SK-N-SH (cell line): ENCODE measurements at regions of chr1 and their contacts with region 1.

Region 1: GRCh38 chr1:54406339-54407153 is at the start of gene SSBP3:
- DNase-seq: peak; percentile 99
- H3K4me3 ChIP-seq: peak within 1 kb of the TSS; percentile 72 to 84
- H3K27ac ChIP-seq: peak within 1 kb of the TSS; percentile 96 to 99
- H3K4me1 ChIP-seq: peaks cover 20 to 41% of the 10 kb centered on the region in 2 experiments
- H3K27me3 ChIP-seq: no peaks in the 10 kb centered on the region
- CTCF ChIP-seq: peak; percentile 31
- EP300 ChIP-seq: no peak
- RAD21 ChIP-seq: no peak
- polyA plus RNA-seq, gene SSBP3: 18.0 and 26.2 TPM in 2 replicates

Region 2: GRCh38 chr1:54297596-54298283 is 108.8 kb before region 1 on chr1:
- CTCF ChIA-PET with region 1: interaction called, 10 read pairs
- POLR2A ChIA-PET with region 1: no interaction called
- DNase-seq: peak; percentile 80
- H3K4me3 ChIP-seq: no peak overlapping the region
- H3K27ac ChIP-seq: peak overlapping the region in 1 of 2 experiments; percentile 96; a peak in 2 of 4 replicates
- H3K4me1 ChIP-seq: peaks cover 0 to 75% of the 10 kb centered on the region in 2 experiments; a peak in 2 of 4 replicates
- H3K27me3 ChIP-seq: no peaks in the 10 kb centered on the region
- CTCF ChIP-seq: no peak
- EP300 ChIP-seq: 0 out of 4 replicates have a peak, but pooled peaks of 1 of the 2 experiments have one; percentile 56
- RAD21 ChIP-seq: peak; percentile 45

Region 3: DNA sequence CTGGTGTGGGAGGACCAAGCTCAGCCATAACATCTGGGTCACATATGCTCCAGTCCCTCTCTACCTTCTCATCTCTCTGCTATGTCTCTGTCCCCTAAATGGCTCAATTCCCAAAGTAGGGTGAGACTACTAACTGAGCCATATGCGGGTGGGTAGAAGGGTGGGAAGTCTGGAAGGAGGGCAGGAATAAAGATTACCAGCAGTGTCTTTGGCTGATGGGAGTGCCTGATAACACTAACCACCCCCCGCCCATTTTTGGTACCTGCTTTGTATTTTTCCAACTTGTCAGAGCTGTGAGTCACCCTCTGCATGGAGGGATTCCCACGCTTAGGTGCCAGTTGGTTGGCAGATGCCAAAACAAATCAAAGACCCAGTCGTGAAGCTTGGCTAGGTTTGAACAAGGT is 14.6 kb after region 1 on chr1:
- CTCF ChIA-PET with region 1: no interaction called
- POLR2A ChIA-PET with region 1: no interaction called
- DNase-seq: no peak
- H3K4me3 ChIP-seq: no peak overlapping the region
- H3K27ac ChIP-seq: no peak overlapping the region
- H3K4me1 ChIP-seq: no peaks in the 10 kb centered on the region
- H3K27me3 ChIP-seq: no peaks in the 10 kb centered on the region
- CTCF ChIP-seq: no peak
- EP300 ChIP-seq: no peak
- RAD21 ChIP-seq: no peak

Region 4: DNA sequence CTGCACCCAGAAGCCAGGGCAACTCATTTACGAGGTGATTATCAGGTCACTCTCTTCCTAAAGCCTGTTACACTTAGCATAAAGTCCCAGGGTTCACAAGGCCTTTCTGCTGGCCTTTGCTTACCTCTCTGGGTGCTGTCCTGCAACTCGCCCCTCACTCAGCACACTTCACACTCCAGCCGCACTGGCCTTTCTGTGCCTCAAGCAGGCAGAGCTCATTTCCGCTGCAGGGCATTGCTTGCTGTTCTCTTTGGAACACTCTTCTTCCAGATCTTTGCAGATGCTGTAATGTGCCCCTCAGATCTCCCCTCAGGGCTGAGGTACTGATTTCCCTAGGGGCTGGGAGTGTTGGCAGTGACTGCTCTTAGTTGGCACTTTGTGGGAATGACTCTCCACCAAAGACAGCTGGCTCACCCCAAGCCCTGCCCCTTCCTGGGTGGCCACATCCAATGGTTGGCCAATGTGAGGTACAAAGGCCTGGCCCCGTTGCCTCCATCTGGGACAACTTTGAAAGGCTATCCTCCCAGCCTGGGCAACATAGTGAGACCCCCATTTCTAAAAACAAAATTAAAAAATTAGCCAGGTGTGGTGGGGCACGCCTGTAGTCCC is 50.5 kb after region 1 on chr1:
- CTCF ChIA-PET with region 1: no interaction called
- POLR2A ChIA-PET with region 1: no interaction called
- DNase-seq: no peak
- H3K4me3 ChIP-seq: no peak overlapping the region
- H3K27ac ChIP-seq: no peak overlapping the region
- H3K4me1 ChIP-seq: peaks cover 0 to 10% of the 10 kb centered on the region in 2 experiments; a peak in 1 of 4 replicates
- H3K27me3 ChIP-seq: no peaks in the 10 kb centered on the region
- CTCF ChIP-seq: no peak
- EP300 ChIP-seq: no peak
- RAD21 ChIP-seq: no peak